ENCODE measurements at regions of chr15 and their contacts with region 1.

Region 1: DNA sequence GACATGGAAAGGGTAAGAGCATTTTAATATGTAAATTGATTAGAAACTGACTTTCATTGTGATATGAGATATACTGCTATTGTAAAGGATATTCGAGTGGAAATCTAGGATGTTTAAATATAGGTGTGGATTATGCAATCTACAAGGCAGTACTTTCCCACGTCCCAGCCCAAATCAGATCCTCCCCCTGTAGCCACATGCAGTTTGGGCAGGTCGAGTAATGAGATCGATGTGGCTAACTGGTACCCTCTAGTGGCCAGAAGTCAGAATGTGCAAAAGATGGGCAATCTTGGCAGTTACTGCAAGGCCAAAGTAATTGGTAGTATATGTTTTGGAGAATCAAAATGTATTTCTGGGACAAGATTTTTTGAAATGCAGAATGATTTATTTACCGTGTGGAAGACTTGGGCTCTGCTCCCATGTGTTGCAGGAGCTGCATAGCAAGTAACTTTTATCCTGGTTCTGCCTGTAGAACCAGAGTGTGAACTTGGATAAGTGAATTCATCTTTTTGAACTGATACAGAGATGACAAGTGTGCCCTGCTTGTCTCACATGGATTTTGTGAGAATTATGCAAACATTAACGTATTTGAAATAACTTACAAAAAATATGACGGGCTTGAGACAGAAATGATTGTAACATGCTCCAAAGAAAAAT is 94.5 kb upstream of the ADAMTSL3 start:
- DNase-seq: peak in 2 of 4 donors; percentile 46 to 74
- ATAC-seq: peak; percentile 96
- H3K4me3 ChIP-seq: no peak overlapping the region
- H3K27ac ChIP-seq: no peak overlapping the region
- H3K4me1 ChIP-seq: no peaks in the 10 kb centered on the region
- H3K27me3 ChIP-seq: peaks cover 0 to 2% of the 10 kb centered on the region in 2 donors
- CTCF ChIP-seq: peak; percentile 64 to 75

Region 2: GRCh38 chr15:83352119-83352518 is 207.3 kb before region 1 on chr15:
- intact Hi-C with region 1: no loop called
- DNase-seq: no peak
- ATAC-seq: no peak
- H3K4me3 ChIP-seq: no peak overlapping the region
- H3K27ac ChIP-seq: no peak overlapping the region
- H3K4me1 ChIP-seq: no peaks in the 10 kb centered on the region
- H3K27me3 ChIP-seq: peaks cover 0 to 6% of the 10 kb centered on the region in 2 donors
- CTCF ChIP-seq: no peak

Region 3: DNA sequence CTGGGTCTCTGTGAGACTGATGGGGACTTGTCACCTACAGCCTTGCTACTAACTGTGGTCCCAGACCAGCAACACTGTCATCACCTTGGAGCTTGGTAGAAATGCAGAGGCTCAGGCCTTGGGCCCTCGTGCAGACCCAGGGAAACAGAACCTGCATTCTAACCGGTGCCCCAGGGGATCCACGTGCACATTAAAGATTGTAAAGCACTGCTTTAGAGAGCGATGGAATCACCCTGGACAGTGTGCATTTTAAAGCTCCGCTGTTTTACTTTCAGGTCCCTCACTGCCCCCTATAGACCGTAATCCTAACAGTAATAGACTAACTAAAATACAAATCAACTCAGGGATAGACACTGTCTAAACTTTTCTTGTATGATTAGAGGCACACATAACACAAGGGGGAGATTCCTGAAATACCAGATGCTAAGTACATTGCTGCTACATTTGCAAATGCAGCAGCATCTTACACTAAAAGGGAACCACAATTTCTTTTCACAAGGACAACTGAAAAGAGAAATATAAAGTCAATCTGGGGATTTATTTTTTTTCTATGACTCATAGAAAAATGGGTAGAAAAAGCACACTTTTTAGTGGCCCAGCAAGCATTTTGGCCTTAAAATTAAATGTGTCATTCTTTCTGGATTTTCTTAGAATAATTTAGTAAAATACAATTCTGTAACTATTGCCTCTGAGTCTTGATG is 122.8 kb before region 1 on chr15:
- intact Hi-C with region 1: loop called in 1 of 2 experiments (anchors 5 kb)
- DNase-seq: peak in 1 of 4 donors; percentile 34
- ATAC-seq: peak; percentile 70
- H3K4me3 ChIP-seq: no peak overlapping the region
- H3K27ac ChIP-seq: no peak overlapping the region
- H3K4me1 ChIP-seq: no peaks in the 10 kb centered on the region
- H3K27me3 ChIP-seq: peaks cover 0 to 31% of the 10 kb centered on the region in 2 donors
- CTCF ChIP-seq: peak in 1 of 2 donors; percentile 24